PC-9 (cell line): ENCODE measurements at regions of chr1 and their contacts with region 1.

Region 1: GRCh38 chr1:44819608-44820327 is 11.4 kb downstream of the BTBD19 start:
- DNase-seq: peak; percentile 84 to 98
- H3K4me3 ChIP-seq: peak overlapping the region; percentile 67
- H3K27ac ChIP-seq: peak overlapping the region; percentile 83
- H3K4me1 ChIP-seq: peaks cover 27% of the 10 kb centered on the region
- H3K27me3 ChIP-seq: no peaks in the 10 kb centered on the region
- CTCF ChIP-seq: no peak

Region 2: DNA sequence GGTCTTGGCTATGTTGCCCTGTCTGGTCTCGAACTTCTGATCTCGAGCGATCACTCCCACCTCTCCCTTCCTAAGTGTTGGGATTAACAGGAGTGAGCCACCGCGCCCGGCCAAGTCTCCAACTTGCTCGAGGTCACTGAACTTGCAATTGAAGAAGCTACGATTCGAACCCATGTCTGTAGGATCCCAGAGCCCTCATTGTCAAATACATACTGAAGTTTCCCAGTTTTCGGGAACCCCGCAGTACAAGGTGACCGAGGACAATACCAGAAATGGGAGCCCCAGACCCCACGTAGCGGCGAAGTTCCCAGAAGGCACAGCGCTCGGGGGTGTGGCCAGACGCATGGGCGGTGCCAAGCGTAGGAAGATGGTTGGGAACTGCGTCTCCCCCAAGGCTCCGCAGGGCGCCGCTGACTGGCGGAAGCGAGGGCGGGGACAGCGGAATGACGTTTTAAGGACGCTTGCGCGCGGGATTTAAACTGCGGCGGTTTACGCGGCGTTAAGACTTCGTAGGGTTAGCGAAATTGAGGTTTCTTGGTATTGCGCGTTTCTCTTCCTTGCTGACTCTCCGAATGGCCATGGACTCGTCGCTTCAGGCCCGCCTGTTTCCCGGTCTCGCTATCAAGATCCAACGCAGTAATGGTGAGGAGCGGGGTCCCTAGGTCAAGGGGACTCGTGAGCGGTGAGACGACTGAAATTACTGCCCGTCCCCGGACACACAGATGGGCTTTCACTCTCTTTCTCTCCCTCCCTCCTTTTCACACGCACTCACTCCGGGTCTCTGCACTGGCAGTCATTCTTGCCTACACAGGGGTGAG is 80.2 kb before region 1 on chr1 and contains the start of gene KIF2C:
- CTCF ChIA-PET with region 1: no interaction called
- POLR2A ChIA-PET with region 1: interaction called, 16 read pairs
- intact Hi-C with region 1: no loop called
- DNase-seq: peak; percentile 92 to 98
- H3K4me3 ChIP-seq: peak within 1 kb of the TSS; percentile 65
- H3K27ac ChIP-seq: peak within 1 kb of the TSS; percentile 79
- H3K4me1 ChIP-seq: peaks cover 18% of the 10 kb centered on the region
- H3K27me3 ChIP-seq: no peaks in the 10 kb centered on the region
- CTCF ChIP-seq: 0 out of 2 replicates have a peak, but pooled peaks have one; percentile 16
- total RNA-seq, gene KIF2C: 103 and 119 TPM in 2 replicates

Region 3: GRCh38 chr1:44786841-44787426 is 32.8 kb before region 1 on chr1:
- CTCF ChIA-PET with region 1: no interaction called
- POLR2A ChIA-PET with region 1: interaction called, 21 read pairs
- intact Hi-C with region 1: no loop called
- DNase-seq: no peak
- H3K4me3 ChIP-seq: no peak overlapping the region
- H3K27ac ChIP-seq: no peak overlapping the region
- H3K4me1 ChIP-seq: no peaks in the 10 kb centered on the region
- H3K27me3 ChIP-seq: no peaks in the 10 kb centered on the region
- CTCF ChIP-seq: no peak

Region 4: DNA sequence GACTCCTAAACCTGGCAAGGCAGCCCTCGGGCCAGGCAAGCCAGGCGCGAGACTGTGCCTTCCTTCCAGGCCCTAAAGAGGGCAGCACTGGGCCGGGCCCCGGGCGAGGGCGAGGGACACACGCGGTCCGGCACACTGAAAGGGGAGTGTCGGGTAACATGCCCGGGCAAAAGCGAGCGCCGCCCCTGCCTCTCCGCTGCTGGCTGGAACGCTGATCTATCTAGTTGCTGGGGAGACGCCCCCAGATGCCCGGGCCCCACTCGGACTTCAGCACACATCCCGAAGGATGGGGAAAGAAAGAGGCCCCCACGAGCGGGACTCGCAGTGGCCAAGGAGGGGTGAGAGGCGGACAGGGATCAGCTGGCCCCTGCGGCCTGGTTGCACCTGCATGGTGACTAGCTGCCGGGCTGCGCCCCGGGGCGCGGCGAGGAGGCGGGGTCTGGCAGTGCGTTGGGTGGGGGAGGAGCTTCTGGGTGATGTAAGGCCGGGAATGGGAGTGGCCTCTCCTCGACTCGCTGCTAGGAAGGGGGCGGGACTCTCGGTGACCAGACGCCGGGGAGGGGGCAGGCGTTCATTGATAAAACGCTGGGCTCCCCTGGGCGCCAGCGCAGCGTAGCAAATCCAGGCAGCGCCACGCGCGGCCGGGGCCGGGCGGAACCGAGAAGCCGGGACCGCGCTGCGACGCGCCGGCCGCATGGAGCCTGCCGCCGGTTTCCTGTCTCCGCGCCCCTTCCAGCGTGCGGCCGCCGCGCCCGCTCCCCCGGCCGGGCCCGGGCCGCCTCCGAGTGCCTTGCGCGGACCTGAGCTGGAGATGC is 19.8 kb before region 1 on chr1 and contains the start of gene PLK3:
- CTCF ChIA-PET with region 1: interaction called, 10 read pairs
- POLR2A ChIA-PET with region 1: interaction called, 31 read pairs
- intact Hi-C with region 1: loop called (anchors 1 kb)
- DNase-seq: peak; percentile 88 to 99
- H3K4me3 ChIP-seq: peak within 1 kb of the TSS; percentile 82
- H3K27ac ChIP-seq: peak within 1 kb of the TSS; percentile 81
- H3K4me1 ChIP-seq: peaks cover 45% of the 10 kb centered on the region
- H3K27me3 ChIP-seq: no peaks in the 10 kb centered on the region
- CTCF ChIP-seq: peak; percentile 88
- total RNA-seq, gene PLK3: 12.7 and 13.0 TPM in 2 replicates

Region 5: GRCh38 chr1:44924835-44925513 is 105.2 kb after region 1 on chr1:
- CTCF ChIA-PET with region 1: no interaction called
- POLR2A ChIA-PET with region 1: interaction called, 10 read pairs
- intact Hi-C with region 1: no loop called
- DNase-seq: peak; percentile 8 to 44
- H3K4me3 ChIP-seq: no peak overlapping the region
- H3K27ac ChIP-seq: no peak overlapping the region
- H3K4me1 ChIP-seq: peaks cover 10% of the 10 kb centered on the region; the same call in 1 of the 2 replicates
- H3K27me3 ChIP-seq: no peaks in the 10 kb centered on the region
- CTCF ChIP-seq: peak; percentile 54; the same call in 1 of the 2 replicates

Region 6: GRCh38 chr1:45589861-45590260 is 770.1 kb after region 1 on chr1:
- CTCF ChIA-PET with region 1: no interaction called
- POLR2A ChIA-PET with region 1: interaction called, 11 read pairs
- intact Hi-C with region 1: no loop called
- DNase-seq: no peak
- H3K4me3 ChIP-seq: no peak overlapping the region
- H3K27ac ChIP-seq: no peak overlapping the region
- H3K4me1 ChIP-seq: peaks cover 17% of the 10 kb centered on the region
- H3K27me3 ChIP-seq: no peaks in the 10 kb centered on the region
- CTCF ChIP-seq: no peak